Right cardiac atrium (tissue), 5 donors: ENCODE measurements at regions of chr1 and their contacts with region 1.

Region 1: DNA sequence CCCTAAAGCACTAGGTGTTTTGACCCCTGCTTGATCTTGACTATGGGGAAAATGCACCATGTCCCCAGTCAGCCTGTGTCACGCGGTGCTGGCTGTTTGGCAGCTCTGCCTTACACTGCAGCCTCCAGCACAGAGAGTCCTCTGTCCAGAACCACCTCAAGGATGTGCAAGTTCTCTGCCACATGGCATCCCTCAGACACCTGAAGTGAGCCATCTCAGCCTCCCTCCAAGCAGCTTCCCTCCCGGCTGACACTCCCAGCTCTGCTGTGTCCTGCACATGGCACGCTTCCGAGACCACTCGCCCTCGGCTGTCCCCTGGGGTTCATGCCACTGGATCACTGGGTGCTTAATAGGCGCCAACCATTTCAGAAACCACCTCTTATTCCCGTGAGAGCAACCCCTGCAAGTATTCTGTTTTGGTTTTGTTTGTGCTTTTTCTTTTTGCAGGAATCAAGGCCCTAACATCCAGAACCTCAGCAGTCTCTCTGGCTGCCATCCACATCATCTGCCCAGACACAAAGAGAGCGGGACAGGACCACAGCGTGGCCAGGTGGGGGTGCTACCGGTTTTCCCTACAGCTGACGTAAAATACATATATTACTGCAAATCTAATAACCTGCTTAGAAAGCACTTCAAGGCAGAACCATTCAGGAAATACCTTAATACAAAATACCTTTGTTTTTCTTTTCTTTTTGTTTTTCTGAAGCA is 45.7 kb downstream of the CAPZB start:
- DNase-seq: peak in 2 of 3 donors; percentile 71 to 83
- ATAC-seq: peak; percentile 13 to 46
- H3K4me3 ChIP-seq: no peak overlapping the region
- H3K27ac ChIP-seq: peak overlapping the region; percentile 57
- H3K4me1 ChIP-seq: peaks cover 47% of the 10 kb centered on the region
- H3K27me3 ChIP-seq: no peaks in the 10 kb centered on the region

Region 2: GRCh38 chr1:19400875-19401534 is 38.6 kb before region 1 on chr1:
- intact Hi-C with region 1: loop called in 1 of 4 experiments (anchors 5 kb)
- DNase-seq: no peak
- ATAC-seq: no peak
- H3K4me3 ChIP-seq: no peak overlapping the region
- H3K27ac ChIP-seq: peak overlapping the region; percentile 43
- H3K4me1 ChIP-seq: peaks cover 36% of the 10 kb centered on the region
- H3K27me3 ChIP-seq: no peaks in the 10 kb centered on the region

Region 3: GRCh38 chr1:19495799-19496624 is 56.4 kb after region 1 on chr1:
- intact Hi-C with region 1: no loop called
- DNase-seq: no peak
- ATAC-seq: no peak
- H3K4me3 ChIP-seq: no peak overlapping the region
- H3K27ac ChIP-seq: peak overlapping the region; percentile 61
- H3K4me1 ChIP-seq: peaks cover 4% of the 10 kb centered on the region
- H3K27me3 ChIP-seq: no peaks in the 10 kb centered on the region